ENCODE measurements at regions of chr15 and their contacts with region 1.

Region 1: DNA sequence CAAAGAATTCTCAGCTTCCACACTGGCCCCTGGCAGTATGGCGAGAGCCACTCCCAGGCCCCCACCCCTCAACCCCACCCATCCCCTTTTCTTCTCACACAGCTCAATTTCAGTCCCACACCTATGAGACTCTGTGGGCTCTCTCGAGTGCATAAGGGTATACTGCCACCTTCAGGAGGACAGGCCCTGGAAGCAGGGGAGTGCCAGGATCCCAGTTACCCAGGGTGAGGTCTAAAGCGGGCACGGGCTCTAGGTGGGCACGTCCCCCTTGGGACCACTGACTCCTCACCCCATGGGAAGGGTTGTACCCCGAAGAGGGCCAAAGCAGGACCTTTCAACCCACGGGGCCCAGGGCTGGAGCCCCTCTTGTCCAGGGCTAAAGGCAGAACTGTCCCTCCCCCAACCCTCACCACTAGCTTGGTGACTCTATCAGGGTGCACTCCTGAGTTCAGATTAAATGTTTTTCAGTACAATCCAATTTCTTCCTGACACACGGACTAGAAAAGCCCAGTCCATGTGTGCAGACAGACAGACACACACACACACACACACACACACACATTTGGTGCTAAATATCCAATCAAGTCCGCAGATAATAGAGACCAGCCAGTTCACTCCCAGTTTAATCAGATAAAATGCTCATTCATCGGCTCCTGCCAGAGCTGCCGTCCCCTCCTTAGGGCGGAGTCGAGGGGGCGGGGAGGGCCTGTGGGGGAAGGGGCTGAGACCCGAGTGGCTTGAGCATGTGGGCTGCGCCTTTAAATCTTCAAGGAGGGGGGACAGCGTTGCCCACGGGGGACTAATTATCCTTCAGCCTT is 59.4 kb downstream of the CYP11A1 start:
- DNase-seq: peak in 2 of 4 donors; percentile 33 to 63
- ATAC-seq: peak; percentile 83
- H3K4me3 ChIP-seq: no peak overlapping the region
- H3K27ac ChIP-seq: no peak overlapping the region
- H3K4me1 ChIP-seq: no peaks in the 10 kb centered on the region
- H3K27me3 ChIP-seq: peaks cover 0 to 69% of the 10 kb centered on the region in 2 donors
- CTCF ChIP-seq: peak; percentile 45 to 47

Region 2: DNA sequence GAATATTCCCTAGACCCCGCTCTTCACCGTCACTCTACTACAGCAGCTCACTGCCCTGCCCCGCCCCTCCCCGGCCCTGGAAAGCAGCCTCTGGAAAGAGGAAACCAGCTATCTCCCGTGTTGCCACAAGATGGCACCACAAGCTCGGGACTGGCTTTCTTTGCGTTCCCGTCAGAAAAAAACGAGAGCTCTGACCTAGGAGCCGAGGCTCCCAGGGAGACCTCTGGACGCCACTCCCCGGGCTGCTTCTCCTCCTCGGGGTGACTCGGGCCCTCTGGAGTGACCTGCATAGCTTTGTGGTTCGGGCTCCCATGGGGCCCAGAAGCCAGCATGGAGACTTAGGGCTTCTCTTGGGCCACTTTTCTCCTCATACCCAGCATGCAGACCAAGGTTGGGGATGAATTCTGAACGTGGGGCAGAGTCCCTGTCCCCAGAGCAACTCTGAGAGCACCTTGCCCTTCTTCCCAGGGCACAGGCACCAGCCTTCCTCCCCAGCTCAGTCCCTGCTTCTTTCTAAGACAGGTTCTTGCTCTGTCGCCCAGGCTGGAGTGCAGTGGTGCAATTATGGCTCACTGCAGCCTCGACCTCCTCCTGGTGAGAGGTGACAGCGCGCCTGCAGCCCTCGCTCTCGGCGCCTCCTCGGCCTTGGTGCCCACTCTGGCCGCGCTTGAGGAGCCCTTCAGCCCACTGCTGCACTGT is 334.9 kb before region 1 on chr15:
- intact Hi-C with region 1: loop called in 1 of 2 experiments (anchors 10 kb)
- DNase-seq: peak; percentile 84 to 91 (median 88)
- ATAC-seq: peak; percentile 99
- H3K4me3 ChIP-seq: no peak overlapping the region
- H3K27ac ChIP-seq: no peak overlapping the region
- H3K4me1 ChIP-seq: peaks cover 5 to 13% of the 10 kb centered on the region in 2 donors
- H3K27me3 ChIP-seq: peaks cover 0 to 7% of the 10 kb centered on the region in 2 donors
- CTCF ChIP-seq: peak; percentile 56 to 88

Region 3: GRCh38 chr15:74053941-74054529 is 254.0 kb before region 1 on chr15:
- intact Hi-C with region 1: loop called in 1 of 2 experiments (anchors 10 kb)
- DNase-seq: peak; percentile 68 to 93 (median 86)
- ATAC-seq: peak; percentile 90
- H3K4me3 ChIP-seq: no peak overlapping the region
- H3K27ac ChIP-seq: no peak overlapping the region
- H3K4me1 ChIP-seq: peaks cover 12 to 33% of the 10 kb centered on the region in 2 donors
- H3K27me3 ChIP-seq: no peaks in the 10 kb centered on the region
- CTCF ChIP-seq: peak; percentile 40 to 50

Region 4: GRCh38 chr15:74127260-74127953 is 180.6 kb before region 1 on chr15:
- intact Hi-C with region 1: loop called (anchors 2 to 10 kb)
- DNase-seq: peak; percentile 75 to 97 (median 88)
- ATAC-seq: peak; percentile 99
- H3K4me3 ChIP-seq: peak overlapping the region; percentile 6 to 17
- H3K27ac ChIP-seq: no peak overlapping the region
- H3K4me1 ChIP-seq: peaks cover 4 to 34% of the 10 kb centered on the region in 2 donors
- H3K27me3 ChIP-seq: peaks cover 47 to 97% of the 10 kb centered on the region in 2 donors
- CTCF ChIP-seq: peak; percentile 94 to 97

Region 5: DNA sequence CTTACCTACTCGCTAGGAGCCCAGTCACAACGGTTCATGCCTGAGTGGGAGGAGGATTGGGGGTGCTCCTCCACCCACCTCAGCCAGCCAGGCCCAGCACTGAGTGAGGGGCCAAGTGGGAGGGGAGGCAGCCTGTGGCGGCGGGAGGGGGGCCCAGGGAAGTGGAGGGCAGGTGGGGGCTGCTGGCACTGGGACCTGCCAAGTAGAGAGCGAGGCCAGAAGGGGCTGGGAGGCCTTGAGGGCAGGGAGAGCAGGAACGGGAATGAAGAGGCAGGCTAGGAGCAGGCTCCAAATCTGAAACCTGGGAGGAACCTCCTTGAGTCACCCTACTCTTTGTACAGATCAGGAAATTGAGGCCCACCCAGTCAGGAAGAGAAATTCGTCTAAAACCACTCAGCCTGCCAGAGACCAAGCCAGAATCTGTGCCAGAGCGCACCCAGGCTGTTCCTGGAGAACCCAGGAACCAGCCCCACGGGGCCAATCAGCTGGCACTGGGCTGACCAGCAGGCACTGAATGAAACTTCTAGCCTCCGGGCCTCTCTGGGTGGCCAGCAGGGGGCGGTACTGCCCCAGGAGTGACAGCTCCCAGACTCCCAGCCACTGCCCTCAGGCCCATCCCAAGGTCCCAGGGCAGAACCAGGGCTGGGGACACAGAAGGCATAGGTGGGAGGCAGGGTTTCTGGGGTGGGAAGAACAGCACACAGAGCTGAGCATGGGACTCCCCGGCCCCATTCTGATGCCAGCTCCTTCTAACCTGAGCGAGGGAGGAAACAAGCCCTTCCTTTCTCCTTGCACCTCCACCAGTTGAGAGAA is 74.2 kb after region 1 on chr15:
- intact Hi-C with region 1: no loop called
- DNase-seq: peak; percentile 61 to 98 (median 86)
- ATAC-seq: peak; percentile 95
- H3K4me3 ChIP-seq: no peak overlapping the region
- H3K27ac ChIP-seq: no peak overlapping the region
- H3K4me1 ChIP-seq: peaks cover 0 to 36% of the 10 kb centered on the region in 2 donors
- H3K27me3 ChIP-seq: no peaks in the 10 kb centered on the region
- CTCF ChIP-seq: peak; percentile 95 to 98

Region 6: DNA sequence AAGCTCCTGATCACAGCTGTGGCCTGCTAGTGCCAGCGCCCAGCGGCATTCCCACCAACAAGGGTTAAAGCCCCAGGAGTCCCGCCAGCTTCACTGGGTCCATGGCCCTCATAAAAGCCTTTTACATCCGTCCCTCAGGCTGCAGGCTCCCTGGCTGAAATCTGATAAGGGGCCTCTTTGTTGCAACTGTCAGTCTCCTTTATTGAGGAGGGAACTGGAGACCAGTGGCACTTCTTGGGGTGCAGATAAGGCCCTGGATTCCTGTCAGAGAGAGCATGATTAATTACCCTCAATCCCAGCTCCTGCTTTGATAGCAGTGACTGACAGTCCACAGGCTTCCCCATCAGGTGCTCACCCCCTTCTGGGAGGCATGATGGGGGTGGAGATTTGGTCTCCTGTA is 276.7 kb after region 1 on chr15:
- intact Hi-C with region 1: no loop called
- DNase-seq: no peak
- ATAC-seq: no peak
- H3K4me3 ChIP-seq: no peak overlapping the region
- H3K27ac ChIP-seq: no peak overlapping the region
- H3K4me1 ChIP-seq: peaks cover 5 to 19% of the 10 kb centered on the region in 2 donors
- H3K27me3 ChIP-seq: no peaks in the 10 kb centered on the region
- CTCF ChIP-seq: no peak

Measured in left lung (tissue), 14 donors.